ENCODE measurements at regions of chr2 and their contacts with region 1.

Region 1: GRCh38 chr2:206392118-206392517 is 51.2 kb upstream of the ADAM23 start:
- DNase-seq: peak; percentile 55
- H3K4me3 ChIP-seq: no peak overlapping the region
- H3K27ac ChIP-seq: no peak overlapping the region
- H3K4me1 ChIP-seq: no peaks in the 10 kb centered on the region
- H3K27me3 ChIP-seq: no peaks in the 10 kb centered on the region
- CTCF ChIP-seq: peak; percentile 75 to 79

Region 2: DNA sequence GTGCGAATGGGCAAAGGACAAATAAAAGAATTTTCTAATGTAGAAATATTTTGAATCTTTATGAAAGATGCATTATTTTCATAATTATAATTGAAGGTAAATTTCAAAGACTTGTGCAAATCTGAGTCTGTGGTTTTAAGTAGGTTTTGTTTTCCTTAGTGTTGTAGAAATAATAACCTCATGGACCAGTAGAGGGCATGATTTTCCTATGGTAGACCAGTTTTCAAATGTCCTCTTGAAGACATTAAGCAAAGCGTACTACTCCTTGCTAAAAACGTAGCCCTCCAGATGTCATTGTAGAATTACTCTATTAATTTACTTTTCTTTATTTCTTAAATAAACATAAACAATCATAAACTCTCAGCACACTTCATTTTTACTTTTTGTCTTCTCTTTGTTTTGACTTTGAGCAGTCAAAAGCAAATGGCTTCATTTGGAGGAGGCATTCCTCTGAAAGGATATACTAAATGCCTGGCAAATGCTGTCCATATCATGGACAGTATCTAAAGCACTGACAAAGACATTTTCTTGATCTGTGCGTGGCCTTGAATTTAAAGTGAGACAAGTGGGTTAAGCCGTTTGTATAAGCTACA is 164.3 kb after region 1 on chr2:
- CTCF ChIA-PET with region 1: interaction called, 3 read pairs
- dilution Hi-C with region 1: no loop called
- in situ Hi-C with region 1: loop called in 1 of 2 experiments (anchors 10 kb)
- intact Hi-C with region 1: loop called (anchors 1 kb)
- DNase-seq: peak; percentile 26
- H3K4me3 ChIP-seq: no peak overlapping the region
- H3K27ac ChIP-seq: no peak overlapping the region
- H3K4me1 ChIP-seq: no peaks in the 10 kb centered on the region
- H3K27me3 ChIP-seq: peaks cover 3% of the 10 kb centered on the region
- CTCF ChIP-seq: peak; percentile 57 to 58

Region 3: DNA sequence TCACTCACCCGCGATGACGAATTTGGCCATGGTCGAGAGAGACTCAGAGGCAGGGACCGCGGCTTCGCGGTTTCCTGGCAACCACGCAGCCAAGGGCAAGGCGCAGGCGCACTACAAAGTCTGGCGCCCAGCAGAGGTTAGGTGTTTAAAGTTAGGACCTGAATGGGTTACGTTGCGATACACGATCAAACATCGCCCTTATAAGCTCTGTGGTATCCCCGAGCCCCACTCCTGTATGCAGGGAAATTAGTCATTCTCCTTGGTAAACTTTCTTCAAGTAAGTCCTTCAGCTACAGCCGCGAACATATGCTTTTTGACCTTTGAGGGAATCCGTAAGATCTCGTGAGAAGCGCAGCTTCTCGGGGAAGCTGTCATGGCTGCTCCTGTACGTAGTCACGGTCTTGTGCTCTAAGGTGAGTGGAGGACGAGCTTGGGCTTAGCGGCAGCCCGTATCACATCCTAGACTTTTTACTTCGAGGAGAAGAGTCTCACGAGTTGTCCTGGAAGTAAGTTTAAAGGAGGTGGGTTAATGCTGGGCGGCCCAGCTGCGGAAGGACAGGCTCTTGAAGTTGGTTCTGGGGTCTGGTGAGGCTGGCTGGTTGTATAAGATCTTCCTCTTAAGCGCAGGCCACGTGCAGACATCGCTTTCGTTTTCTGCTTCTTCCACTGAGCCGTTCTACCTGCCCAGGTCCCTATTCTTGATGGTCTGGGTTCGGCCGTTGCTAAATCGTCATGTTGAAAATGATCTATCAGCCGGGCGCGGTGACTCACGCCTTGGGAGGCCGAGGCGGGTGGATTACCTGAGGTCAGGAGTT is 373.3 kb after region 1 on chr2 and contains the starts of genes FASTKD2 and MDH1B:
- CTCF ChIA-PET with region 1: no interaction called
- dilution Hi-C with region 1: no loop called
- in situ Hi-C with region 1: no loop called
- intact Hi-C with region 1: loop called (anchors 5 kb)
- DNase-seq: peak; percentile 96
- H3K4me3 ChIP-seq: peak within 1 kb of the TSS; percentile 76 to 82 (median 79)
- H3K27ac ChIP-seq: peak within 1 kb of the TSS; percentile 98
- H3K4me1 ChIP-seq: peaks cover 12% of the 10 kb centered on the region
- H3K27me3 ChIP-seq: no peaks in the 10 kb centered on the region
- CTCF ChIP-seq: no peak
- total RNA-seq, gene FASTKD2: 32.6 to 45.0 TPM
- total RNA-seq, gene MDH1B: 0.54 to 1.8 TPM

Region 4: DNA sequence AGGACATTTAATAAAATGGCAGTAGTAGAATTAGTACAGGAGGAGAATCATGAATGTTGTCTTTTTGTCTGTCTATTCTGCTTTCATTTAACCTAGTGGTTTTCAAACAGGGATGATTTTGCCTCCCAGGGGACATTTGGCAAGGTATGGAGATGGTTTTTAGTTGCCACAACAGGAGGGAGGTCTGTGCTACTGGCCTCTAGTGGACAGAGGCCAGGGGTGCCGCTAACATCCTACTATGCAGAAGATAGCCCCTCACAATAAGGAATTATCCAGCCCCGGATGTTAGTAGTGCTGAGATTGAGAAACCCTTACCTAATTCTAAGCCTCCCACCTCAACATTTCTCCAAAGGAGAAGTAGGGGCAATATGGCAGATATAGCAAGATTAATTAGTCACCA is 391.6 kb after region 1 on chr2:
- CTCF ChIA-PET with region 1: no interaction called
- dilution Hi-C with region 1: no loop called
- in situ Hi-C with region 1: no loop called
- intact Hi-C with region 1: loop called (anchors 1 kb)
- DNase-seq: no peak
- H3K4me3 ChIP-seq: no peak overlapping the region
- H3K27ac ChIP-seq: no peak overlapping the region
- H3K4me1 ChIP-seq: no peaks in the 10 kb centered on the region
- H3K27me3 ChIP-seq: no peaks in the 10 kb centered on the region
- CTCF ChIP-seq: peak; percentile 55 to 59

Measured in mammary epithelial cell (primary cell).